ENCODE measurements at regions of chr17 and their contacts with region 1.

Region 1: GRCh38 chr17:15885770-15886169 is 59.2 kb upstream of the ADORA2B start:
- DNase-seq: no peak
- H3K4me3 ChIP-seq: no peak overlapping the region
- H3K27me3 ChIP-seq: no peaks in the 10 kb centered on the region; the same call in 1 of the 2 replicates
- CTCF ChIP-seq: no peak

Region 2: GRCh38 chr17:15966879-15967248 is 81.1 kb after region 1 on chr17:
- CTCF ChIA-PET with region 1: no interaction called
- POLR2A ChIA-PET with region 1: interaction called, 10 read pairs
- DNase-seq: no peak
- H3K4me3 ChIP-seq: no peak overlapping the region
- H3K27me3 ChIP-seq: no peaks in the 10 kb centered on the region
- CTCF ChIP-seq: no peak

Measured in BJ (cell line).